ENCODE measurements at regions of chr12 and their contacts with region 1.

Region 1: GRCh38 chr12:7108796-7109571 is at the start of gene C1RL:
- DNase-seq: peak; percentile 92
- H3K4me3 Mint-ChIP-seq: peak within 1 kb of the TSS; percentile 94
- H3K27ac Mint-ChIP-seq: peak within 1 kb of the TSS; percentile 59
- H3K4me1 Mint-ChIP-seq: peaks cover 17% of the 10 kb centered on the region
- H3K27me3 Mint-ChIP-seq: no peaks in the 10 kb centered on the region
- CTCF ChIP-seq: peak; percentile 89
- total RNA-seq, gene C1RL: 43.2 and 43.4 TPM in 2 replicates

Region 2: DNA sequence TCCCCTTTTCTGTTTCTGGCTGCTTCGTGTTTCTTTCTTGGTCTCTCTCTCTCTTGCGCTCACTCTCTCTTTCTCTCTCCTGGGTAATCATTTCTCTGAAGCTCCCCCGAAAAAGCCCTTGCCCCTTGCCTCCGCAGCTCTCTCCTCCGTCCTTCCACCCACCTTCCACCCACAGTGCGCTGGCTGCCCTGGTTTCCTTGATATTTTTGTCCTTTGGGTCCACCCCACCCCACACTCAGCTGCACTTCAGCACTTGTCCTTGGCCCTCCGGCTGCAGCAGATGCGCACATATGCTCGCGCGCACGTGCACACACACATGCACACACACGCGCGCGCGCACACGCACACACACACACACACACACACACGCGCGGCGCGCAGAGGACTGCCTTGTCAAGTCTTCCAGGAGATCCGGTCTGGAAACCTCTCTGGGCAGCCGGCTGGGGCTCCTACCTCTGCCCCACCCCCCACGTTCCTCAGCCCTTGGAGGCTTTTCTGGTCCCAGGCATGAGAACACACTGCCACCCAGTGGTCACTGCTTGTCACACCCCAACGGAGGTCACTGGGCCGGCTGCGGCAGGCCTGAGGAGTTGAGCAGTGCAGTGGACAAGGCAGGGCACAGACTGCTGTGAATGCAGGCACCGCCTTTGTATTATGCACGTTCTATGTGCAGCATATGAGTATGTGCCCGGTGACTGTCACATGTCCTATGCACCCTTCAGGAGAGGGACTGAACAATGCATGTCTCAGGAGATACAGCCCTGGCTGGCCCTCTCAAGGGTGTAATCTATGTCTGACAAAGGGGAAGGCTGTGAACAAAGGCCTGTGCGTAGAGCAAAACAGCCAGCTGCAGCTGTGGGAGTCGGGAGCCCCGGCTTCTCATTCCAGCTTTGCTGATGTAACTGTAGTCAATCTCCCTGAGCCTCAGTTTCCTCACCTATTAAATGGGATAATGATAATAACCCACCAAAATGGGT is 330.1 kb before region 1 on chr12:
- CTCF ChIA-PET with region 1: no interaction called
- intact Hi-C with region 1: no loop called
- DNase-seq: peak; percentile 96
- H3K4me3 Mint-ChIP-seq: peak overlapping the region; percentile 70
- H3K27ac Mint-ChIP-seq: no peak overlapping the region
- H3K4me1 Mint-ChIP-seq: peaks cover 35% of the 10 kb centered on the region
- H3K27me3 Mint-ChIP-seq: peaks cover 67% of the 10 kb centered on the region
- CTCF ChIP-seq: peak; percentile 91

Region 3: DNA sequence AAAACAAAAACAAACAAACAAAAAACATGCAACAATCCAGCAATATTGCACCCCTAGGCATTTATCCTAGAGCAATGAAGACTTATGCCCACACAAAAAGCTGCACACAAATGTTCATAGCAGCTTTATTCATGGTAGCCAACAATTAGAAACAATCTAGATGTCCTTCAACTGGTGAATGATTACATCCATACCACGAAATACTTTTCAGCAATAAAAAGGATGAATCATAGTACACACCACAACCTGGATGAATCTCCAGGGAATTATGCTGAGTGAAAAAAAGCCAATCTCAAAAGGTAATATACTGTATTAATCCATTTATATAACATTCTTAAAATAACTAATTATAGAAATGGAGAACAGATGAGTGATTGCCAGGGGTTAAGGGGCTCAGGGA is 301.8 kb before region 1 on chr12:
- CTCF ChIA-PET with region 1: no interaction called
- intact Hi-C with region 1: no loop called
- DNase-seq: no peak
- H3K4me3 Mint-ChIP-seq: no peak overlapping the region
- H3K27ac Mint-ChIP-seq: no peak overlapping the region
- H3K4me1 Mint-ChIP-seq: no peaks in the 10 kb centered on the region
- H3K27me3 Mint-ChIP-seq: peaks cover 34% of the 10 kb centered on the region
- CTCF ChIP-seq: no peak

Region 4: GRCh38 chr12:7060353-7060954 is 48.5 kb before region 1 on chr12 and contains the start of gene C1S:
- CTCF ChIA-PET with region 1: interaction called, 10 read pairs
- intact Hi-C with region 1: loop called (anchors 1 kb)
- DNase-seq: peak; percentile 63
- H3K4me3 Mint-ChIP-seq: no peak within 1 kb of the TSS
- H3K27ac Mint-ChIP-seq: no peak within 1 kb of the TSS
- H3K4me1 Mint-ChIP-seq: peaks cover 14% of the 10 kb centered on the region
- H3K27me3 Mint-ChIP-seq: peaks cover 14% of the 10 kb centered on the region
- CTCF ChIP-seq: peak; percentile 26
- total RNA-seq, gene C1S: 7.1 and 9.7 TPM in 2 replicates

Region 5: DNA sequence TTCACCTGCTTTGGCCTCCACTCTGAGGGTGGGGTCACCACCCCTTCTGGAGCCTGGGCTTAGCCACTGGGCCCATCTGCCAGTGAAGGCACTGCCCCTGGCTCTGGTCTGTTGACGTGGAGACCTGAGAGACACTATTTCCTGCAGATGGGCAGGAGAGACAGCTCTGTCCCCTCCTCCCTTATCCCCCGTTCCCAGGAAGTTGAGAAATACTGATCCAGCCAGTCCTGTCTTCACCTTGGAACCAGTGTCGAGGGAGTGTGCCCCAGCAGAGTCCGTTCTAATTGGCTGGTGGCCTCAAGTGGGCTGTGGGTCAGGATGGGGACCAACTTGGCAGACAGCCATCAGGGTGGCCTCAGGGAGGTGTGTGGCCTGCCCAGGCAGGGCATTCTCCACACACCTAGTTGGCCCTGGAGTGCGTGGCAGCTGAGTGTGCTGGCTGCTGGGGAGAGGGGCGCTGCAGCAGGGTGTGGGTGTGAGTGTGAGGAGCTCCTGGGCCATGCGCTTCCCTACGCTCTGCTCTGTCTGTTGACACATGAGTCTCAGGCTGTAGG is 46.6 kb after region 1 on chr12:
- CTCF ChIA-PET with region 1: no interaction called
- intact Hi-C with region 1: no loop called
- DNase-seq: no peak
- H3K4me3 Mint-ChIP-seq: no peak overlapping the region
- H3K27ac Mint-ChIP-seq: no peak overlapping the region
- H3K4me1 Mint-ChIP-seq: no peaks in the 10 kb centered on the region
- H3K27me3 Mint-ChIP-seq: peaks cover 3% of the 10 kb centered on the region
- CTCF ChIP-seq: no peak